Activated CD4-positive, alpha-beta T cell treated with anti-CD3 and anti-CD28 coated beads, Interleukin-2, amount 10 ng/mL, durations not matched to agents 7 days and 5 days (primary cell): ENCODE measurements at regions of chr22 and their contacts with region 1.

Region 1: DNA sequence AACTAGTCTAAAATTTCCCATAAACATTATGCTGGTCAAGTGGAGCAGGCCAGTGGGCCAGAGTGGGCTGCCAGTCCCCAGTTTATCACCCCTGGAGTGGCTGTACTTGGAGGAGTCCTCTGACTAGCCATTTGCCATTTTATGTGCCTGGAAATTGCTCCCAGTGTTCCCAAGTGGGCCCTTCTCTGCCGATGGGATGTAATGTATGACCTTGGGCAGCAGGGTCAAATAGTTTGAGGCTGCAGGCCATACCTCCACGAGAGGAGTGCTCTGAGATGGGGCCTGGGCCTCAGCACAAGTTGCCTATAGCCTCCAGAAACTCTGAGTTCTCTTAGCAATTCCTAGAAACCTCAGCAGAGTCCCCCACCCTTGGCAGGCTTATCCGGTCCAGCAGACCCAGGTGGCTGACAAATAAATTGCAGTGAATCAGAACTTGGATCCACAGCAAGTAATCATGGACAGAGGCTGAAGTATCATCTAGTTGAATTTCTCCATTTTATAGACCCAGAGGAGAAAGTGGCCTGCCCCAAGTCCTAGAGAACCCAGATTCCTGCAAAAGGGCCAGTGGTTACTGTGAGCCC is 17.8 kb upstream of the PATZ1 start:
- DNase-seq: no peak
- H3K4me3 Mint-ChIP-seq: no peak overlapping the region
- H3K27ac Mint-ChIP-seq: no peak overlapping the region
- H3K4me1 Mint-ChIP-seq: peaks cover 4% of the 10 kb centered on the region
- H3K27me3 Mint-ChIP-seq: no peaks in the 10 kb centered on the region

Region 2: GRCh38 chr22:31286360-31287255 is 77.4 kb before region 1 on chr22:
- CTCF ChIA-PET with region 1: no interaction called
- POLR2A ChIA-PET with region 1: no interaction called
- DNase-seq: peak; percentile 79
- H3K4me3 Mint-ChIP-seq: peak overlapping the region; percentile 99
- H3K27ac Mint-ChIP-seq: peak overlapping the region; percentile 99
- H3K4me1 Mint-ChIP-seq: peaks cover 74% of the 10 kb centered on the region
- H3K27me3 Mint-ChIP-seq: no peaks in the 10 kb centered on the region

Region 3: DNA sequence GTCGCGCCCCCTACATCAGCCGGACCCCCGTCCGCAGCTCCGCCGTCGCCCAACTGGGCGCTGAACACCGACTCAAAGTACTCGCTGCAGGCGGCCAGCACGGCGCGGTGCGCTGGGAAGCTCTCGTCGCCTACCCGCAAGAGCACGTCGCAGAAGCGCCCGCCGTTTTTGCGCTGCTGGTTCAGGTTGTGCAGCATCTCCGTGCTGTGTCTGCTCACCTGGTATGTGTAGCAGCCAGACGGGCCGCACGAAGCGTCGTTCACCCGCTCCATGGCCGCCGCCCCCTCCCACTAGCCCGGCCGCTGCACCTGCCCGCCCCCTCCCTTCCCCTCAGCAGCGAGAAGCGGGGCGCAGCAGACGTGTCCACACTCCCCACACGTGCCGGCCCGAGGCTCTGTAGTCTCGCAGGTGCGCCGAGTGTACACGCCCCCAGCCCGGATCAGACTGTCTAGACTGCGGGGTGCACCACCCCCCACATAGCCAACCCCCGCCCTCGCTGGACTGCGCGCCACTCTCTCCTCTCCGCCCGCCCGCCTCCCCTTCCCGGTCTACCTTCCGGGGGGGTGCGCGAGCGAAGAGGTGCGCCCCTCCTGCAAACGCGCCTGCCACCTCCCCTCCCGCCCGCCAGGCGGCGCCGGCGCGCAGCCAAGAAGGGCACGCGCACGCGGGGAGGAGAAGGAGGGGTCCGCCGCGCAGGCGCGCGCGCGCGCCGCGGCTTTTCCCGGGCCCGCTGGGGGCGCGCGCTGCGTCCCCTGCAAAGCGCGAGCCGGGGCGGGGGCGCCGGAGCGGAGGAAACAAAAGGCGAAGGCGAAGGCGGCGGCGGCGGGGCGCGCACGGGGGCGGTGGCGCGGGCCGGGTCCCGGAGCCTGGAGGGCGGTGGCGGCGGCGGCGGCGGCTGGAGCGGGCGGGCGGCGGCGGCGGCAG is 18.4 kb before region 1 on chr22:
- CTCF ChIA-PET with region 1: interaction called, 18 read pairs
- POLR2A ChIA-PET with region 1: no interaction called
- DNase-seq: peak; percentile 86
- H3K4me3 Mint-ChIP-seq: peak overlapping the region; percentile 83
- H3K27ac Mint-ChIP-seq: peak overlapping the region; percentile 91
- H3K4me1 Mint-ChIP-seq: peaks cover 55% of the 10 kb centered on the region
- H3K27me3 Mint-ChIP-seq: no peaks in the 10 kb centered on the region

Region 4: DNA sequence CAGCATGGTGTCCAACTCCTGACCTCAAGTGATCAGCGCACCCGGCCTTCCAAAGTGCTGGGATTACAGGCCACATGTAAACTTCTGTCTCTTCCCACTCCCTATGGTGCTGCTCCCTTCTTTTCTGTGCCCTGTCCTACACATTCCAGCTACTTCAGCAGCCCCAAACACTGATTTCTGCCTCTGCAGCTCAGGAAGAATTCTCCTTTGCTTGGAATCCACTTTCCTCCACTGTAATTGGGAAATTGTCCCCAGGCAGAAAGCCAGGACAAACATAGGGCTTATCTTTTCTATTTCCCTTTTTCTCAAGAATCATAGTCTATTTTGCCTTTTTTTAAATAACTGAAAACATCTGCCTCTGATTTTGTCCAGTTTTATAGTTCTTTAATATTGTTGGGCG is 14.1 kb after region 1 on chr22:
- CTCF ChIA-PET with region 1: no interaction called
- POLR2A ChIA-PET with region 1: no interaction called
- DNase-seq: no peak
- H3K4me3 Mint-ChIP-seq: no peak overlapping the region
- H3K27ac Mint-ChIP-seq: no peak overlapping the region
- H3K4me1 Mint-ChIP-seq: peaks cover 6% of the 10 kb centered on the region
- H3K27me3 Mint-ChIP-seq: no peaks in the 10 kb centered on the region